Ascending aorta (tissue), 2 donors: ENCODE measurements at regions of chr3 and their contacts with region 1.

Region 1: GRCh38 chr3:143001369-143002082 is at the start of gene U2SURP:
- DNase-seq: peak; percentile 85 to 98
- H3K4me3 ChIP-seq: peak within 1 kb of the TSS; percentile 93 to 94
- H3K27ac ChIP-seq: peak within 1 kb of the TSS; percentile 93
- H3K4me1 ChIP-seq: peaks cover 4 to 28% of the 10 kb centered on the region in 2 donors
- H3K27me3 ChIP-seq: no peaks in the 10 kb centered on the region
- CTCF ChIP-seq: peak in 1 of 3 experiments; percentile 26
- total RNA-seq, gene U2SURP: 68.6 TPM

Region 2: GRCh38 chr3:142595951-142596725 is 405.4 kb before region 1 on chr3 and contains the start of gene PLS1:
- intact Hi-C with region 1: loop called (anchors 5 kb)
- DNase-seq: peak; percentile 37 to 89
- H3K4me3 ChIP-seq: peak within 1 kb of the TSS; percentile 67 to 73
- H3K27ac ChIP-seq: peak within 1 kb of the TSS; percentile 46 to 56
- H3K4me1 ChIP-seq: peaks cover 0 to 3% of the 10 kb centered on the region in 2 donors
- H3K27me3 ChIP-seq: no peaks in the 10 kb centered on the region
- CTCF ChIP-seq: no peak
- total RNA-seq, gene PLS1: 1.8 TPM